OCI-LY7 (cell line): ENCODE measurements at regions of chr15 and their contacts with region 1.

Region 1: DNA sequence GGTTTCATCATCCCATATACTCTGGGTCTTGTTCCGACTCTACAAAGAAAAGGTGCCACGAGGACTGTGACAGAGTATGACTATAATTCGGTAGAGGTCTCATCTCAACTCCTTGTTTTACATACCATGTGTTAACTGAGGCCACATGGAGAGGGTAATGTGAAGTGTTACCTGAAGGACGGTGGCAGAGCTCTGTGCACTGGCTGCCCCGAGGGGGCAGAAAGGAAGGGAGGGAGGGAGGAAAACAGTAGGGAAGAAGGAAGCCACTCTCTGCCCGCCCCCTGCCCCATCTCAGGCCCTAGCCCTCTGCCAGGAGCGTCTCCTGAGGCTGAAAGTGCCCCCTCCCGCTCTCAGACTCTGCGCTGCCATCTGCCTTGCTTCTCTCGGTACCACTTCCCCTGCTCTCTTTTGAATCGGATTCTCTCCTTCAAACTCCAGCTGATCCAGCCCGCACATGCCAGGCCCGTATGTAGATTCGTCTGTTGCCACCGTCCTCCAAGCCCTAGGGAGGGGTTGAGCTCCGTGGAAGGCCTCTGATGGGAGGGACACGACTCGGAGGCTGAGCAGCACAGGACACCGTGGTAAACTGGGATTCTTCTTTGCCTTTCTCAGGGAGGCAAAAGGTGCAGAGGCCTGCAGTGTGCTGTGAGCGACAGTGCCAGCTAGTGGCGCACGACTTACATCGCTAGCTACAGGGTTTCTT is 70.5 kb upstream of the ATP10A start:
- DNase-seq: peak; percentile 91
- H3K4me3 ChIP-seq: peak overlapping the region; percentile 49
- H3K27ac ChIP-seq: no peak overlapping the region
- H3K4me1 ChIP-seq: peaks cover 22% of the 10 kb centered on the region
- CTCF ChIP-seq: peak; percentile 80

Region 2: GRCh38 chr15:25438601-25439368 is 494.8 kb before region 1 on chr15 and contains the start of gene UBE3A:
- CTCF ChIA-PET with region 1: no interaction called
- POLR2A ChIA-PET with region 1: no interaction called
- intact Hi-C with region 1: loop called (anchors 10 kb)
- DNase-seq: peak; percentile 94
- H3K4me3 ChIP-seq: peak within 1 kb of the TSS; percentile 98
- H3K27ac ChIP-seq: peak within 1 kb of the TSS; percentile 84
- H3K4me1 ChIP-seq: peaks cover 35% of the 10 kb centered on the region
- CTCF ChIP-seq: peak; percentile 17
- total RNA-seq, gene UBE3A: 95.3 and 95.9 TPM in 2 replicates

Region 3: DNA sequence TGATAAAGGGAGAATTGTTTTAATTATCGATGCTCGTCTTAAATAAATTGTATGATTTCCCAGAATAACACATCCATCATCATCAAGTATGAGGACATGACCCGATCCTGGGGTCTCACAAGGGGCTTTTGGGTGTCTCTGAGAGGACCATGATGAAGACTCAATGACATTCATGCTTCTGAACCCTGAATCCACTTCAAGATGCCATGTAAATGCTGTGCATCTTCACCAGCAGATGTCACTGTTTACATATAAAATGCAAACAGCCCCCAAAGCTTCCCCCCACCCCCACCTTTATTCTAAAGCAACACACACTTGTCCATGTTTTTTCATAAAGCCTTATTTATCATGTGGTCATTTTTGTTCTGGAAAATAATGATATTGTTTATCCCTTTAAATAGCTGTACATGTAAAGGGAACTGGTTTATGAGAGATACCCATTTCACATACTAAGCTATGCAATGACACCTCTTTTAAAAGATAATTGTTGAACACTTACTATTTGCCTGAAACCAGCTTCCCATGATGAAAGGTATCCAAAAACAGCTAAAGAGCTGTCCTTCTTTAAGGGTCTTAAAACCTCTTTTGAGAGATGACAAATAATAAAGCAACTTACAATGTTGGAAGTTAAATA is 425.1 kb before region 1 on chr15:
- CTCF ChIA-PET with region 1: no interaction called
- POLR2A ChIA-PET with region 1: no interaction called
- intact Hi-C with region 1: loop called (anchors 2 kb)
- DNase-seq: peak; percentile 56
- H3K4me3 ChIP-seq: no peak overlapping the region
- H3K27ac ChIP-seq: no peak overlapping the region
- H3K4me1 ChIP-seq: no peaks in the 10 kb centered on the region
- CTCF ChIP-seq: peak; percentile 90

Region 4: DNA sequence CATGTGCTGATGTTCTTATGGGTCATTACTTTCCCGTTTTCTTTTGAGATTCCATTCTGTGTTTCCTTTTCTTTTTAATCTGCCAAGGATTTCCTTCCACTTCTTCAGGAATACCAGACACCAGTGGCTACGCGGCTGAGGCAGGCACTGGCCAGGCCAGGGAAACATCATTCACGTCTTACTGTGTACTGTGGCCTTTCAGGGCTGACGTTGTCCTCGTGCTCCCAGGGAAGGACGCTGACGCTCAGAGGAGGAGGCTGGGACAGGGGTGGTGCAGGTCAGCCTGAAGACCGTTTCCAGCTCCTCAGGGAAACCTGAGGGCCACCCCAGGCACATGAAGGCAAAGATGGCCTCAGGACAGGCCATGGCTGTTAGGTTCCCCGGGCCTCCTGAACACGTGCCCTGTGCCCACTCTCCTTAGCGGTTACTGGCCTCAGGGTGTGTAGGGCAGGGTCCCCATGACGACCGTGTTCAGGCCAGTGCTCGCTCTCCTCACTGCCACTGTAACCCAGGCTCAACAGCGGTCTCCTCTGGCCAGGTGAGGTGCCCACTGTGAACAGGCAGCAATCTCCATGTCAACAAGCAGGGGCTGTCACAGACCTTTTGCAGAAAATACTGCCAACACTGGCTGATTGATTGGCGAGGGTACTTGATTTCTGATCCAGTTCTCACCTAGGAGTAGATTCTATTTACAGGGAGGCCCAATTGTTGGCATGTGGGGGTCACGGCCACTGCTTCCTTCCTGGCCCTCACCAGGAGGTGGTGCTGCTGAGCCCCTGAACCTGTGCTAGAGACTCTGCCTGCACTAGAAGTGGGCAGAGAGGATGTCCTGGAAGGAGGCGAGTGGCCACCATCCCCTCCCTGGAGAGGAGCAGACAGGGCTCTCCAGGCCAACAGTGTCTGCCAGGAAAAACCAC is 240.0 kb before region 1 on chr15:
- CTCF ChIA-PET with region 1: interaction called, 3 read pairs
- POLR2A ChIA-PET with region 1: interaction called, 3 read pairs
- intact Hi-C with region 1: loop called (anchors 1 kb)
- DNase-seq: peak; percentile 45
- H3K4me3 ChIP-seq: no peak overlapping the region
- H3K27ac ChIP-seq: no peak overlapping the region
- H3K4me1 ChIP-seq: no peaks in the 10 kb centered on the region
- CTCF ChIP-seq: peak; percentile 82

Region 5: DNA sequence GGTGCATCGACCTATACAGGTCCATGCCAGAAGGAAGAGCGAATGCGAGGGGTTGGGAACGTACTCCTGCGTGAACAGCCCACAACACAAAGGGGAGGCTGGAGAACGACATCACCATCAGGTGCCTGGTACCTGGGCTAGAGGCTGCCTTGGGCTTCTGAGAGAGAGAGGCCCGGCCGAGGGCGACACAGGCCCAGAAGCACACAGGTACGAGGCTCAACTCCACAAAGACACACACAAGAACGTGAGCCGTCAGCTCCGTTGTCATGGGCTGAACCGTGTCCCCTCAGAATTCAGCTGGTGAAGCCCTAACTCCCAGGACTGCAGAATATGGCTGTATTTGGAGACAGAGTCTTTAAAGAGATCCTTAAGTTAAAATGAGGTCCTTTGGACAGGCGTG is 204.8 kb before region 1 on chr15:
- CTCF ChIA-PET with region 1: no interaction called
- POLR2A ChIA-PET with region 1: no interaction called
- intact Hi-C with region 1: no loop called
- DNase-seq: no peak
- H3K4me3 ChIP-seq: no peak overlapping the region
- H3K27ac ChIP-seq: no peak overlapping the region
- H3K4me1 ChIP-seq: no peaks in the 10 kb centered on the region
- CTCF ChIP-seq: no peak

Region 6: DNA sequence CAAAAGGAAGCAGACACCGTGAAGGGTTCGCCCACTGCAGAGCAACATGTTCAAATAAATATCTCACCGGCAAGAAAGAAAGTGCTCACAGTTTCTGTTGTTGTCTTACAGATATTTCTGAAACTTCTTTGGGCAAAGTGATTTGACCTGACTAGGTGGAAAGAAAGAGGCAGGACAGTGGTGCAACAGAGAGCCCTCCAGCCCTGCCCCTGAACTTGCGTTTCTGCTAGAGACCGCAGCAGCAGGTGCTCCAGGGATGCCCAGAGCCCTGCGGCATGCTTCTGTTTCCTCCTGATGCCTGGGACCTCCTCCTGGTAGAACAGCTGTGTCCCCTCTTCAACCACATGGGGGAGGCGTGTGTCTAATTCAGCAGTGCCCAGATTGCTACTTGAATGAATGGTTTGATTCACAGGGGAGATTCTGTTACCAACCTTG is 193.9 kb before region 1 on chr15:
- CTCF ChIA-PET with region 1: no interaction called
- POLR2A ChIA-PET with region 1: no interaction called
- intact Hi-C with region 1: loop called (anchors 1 kb)
- DNase-seq: peak; percentile 72
- H3K4me3 ChIP-seq: no peak overlapping the region
- H3K27ac ChIP-seq: no peak overlapping the region
- H3K4me1 ChIP-seq: no peaks in the 10 kb centered on the region
- CTCF ChIP-seq: peak; percentile 76

Region 7: GRCh38 chr15:25783607-25784540 is 149.7 kb before region 1 on chr15:
- CTCF ChIA-PET with region 1: interaction called, 9 read pairs
- POLR2A ChIA-PET with region 1: interaction called, 3 read pairs
- intact Hi-C with region 1: loop called (anchors 5 kb)
- DNase-seq: peak; percentile 54
- H3K4me3 ChIP-seq: no peak overlapping the region
- H3K27ac ChIP-seq: no peak overlapping the region
- H3K4me1 ChIP-seq: peaks cover 6% of the 10 kb centered on the region
- CTCF ChIP-seq: peak; percentile 85

Region 8: GRCh38 chr15:26864664-26865191 is 931.1 kb after region 1 on chr15:
- CTCF ChIA-PET with region 1: no interaction called
- POLR2A ChIA-PET with region 1: no interaction called
- intact Hi-C with region 1: loop called (anchors 10 kb)
- DNase-seq: peak; percentile 32
- H3K4me3 ChIP-seq: no peak overlapping the region
- H3K27ac ChIP-seq: no peak overlapping the region
- H3K4me1 ChIP-seq: no peaks in the 10 kb centered on the region
- CTCF ChIP-seq: peak; percentile 82